ENCODE measurements at regions of chr9 and their contacts with region 1.

Region 1: DNA sequence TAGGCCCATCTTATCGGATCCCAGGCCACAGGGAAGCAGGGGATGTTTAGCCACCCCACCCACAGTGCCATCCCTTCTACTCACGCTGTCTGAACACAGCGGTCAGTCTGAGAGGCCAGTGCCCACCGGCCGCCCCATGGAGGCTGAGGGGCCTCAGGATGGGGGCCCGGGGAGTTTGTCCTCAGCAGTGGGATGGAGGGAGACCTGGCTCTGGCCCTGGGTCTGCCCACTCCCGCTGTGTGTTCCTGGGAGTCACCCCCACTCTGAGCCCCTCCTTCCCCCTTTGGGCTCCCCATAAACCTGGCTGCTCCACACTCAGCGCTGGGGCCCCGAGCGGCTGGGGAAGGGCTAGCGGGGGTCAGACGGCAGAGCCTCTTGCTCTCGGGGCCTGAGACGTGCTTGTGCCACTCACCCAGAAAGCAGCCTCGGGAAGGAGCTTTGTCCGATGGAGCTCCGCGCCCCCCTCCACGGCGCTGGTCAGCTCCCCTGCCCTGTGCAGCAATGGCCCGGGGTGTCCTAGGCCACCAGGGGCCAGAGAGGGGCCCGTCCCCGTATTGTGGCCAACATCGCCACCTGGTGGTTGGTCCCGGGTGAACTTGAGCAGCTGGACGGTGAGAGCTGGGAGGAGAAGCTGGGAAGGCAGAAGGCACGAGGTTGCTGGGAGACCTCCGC is 10.9 kb upstream of the LAMC3 start:
- DNase-seq: peak; percentile 49 to 69 (median 58)
- H3K4me3 ChIP-seq: no peak overlapping the region
- H3K27ac ChIP-seq: no peak overlapping the region
- H3K4me1 ChIP-seq: peaks cover 0 to 27% (median 15%) of the 10 kb centered on the region in 4 experiments
- H3K27me3 ChIP-seq: peaks cover 0 to 16% (median 0%) of the 10 kb centered on the region in 5 experiments

Region 2: GRCh38 chr9:130707225-130707976 is 290.7 kb before region 1 on chr9:
- CTCF ChIA-PET with region 1: interaction called, 11 read pairs
- POLR2A ChIA-PET with region 1: no interaction called
- DNase-seq: peak; percentile 79 to 87 (median 83)
- H3K4me3 ChIP-seq: no peak overlapping the region
- H3K27ac ChIP-seq: no peak overlapping the region
- H3K4me1 ChIP-seq: peaks cover 0 to 3% (median 0%) of the 10 kb centered on the region in 4 experiments
- H3K27me3 ChIP-seq: no peaks in the 10 kb centered on the region

Region 3: DNA sequence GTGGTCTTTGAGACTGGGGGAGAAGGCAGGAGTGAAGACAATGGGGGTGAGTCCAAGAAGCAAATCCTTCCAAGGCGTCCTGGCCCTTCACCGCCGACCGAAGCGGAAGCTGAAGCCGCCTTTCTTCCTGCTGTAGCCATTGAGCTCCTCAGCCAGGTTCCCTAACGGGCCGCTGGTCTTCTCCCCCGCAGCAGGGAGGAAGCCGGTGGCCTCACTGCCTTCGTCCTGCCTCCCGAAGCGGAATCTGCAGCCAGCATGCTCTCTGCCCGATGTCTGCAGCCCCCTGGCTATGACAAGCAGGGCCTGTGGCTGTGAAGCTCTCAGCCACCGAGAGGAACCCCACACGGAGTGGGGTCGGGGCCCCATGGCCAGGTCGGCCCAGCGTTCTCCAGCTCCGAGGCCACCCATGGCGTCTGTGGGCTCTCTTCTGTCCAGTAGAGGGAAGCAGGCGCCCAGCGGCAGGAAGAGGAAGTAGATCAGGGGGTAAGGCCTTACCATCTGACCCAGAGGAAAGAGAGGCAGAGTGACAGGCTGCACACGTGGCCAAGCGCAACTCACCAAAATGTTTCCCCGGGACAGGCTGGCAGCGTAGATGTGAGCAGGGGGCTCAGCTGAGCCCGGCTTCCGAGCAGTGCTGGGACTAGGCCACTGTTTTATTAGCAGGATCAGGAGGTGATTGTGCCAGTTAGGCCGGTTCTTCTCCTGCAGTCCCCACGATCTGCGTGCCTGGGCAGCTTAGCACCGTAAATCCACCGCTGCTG is 104.5 kb before region 1 on chr9:
- CTCF ChIA-PET with region 1: interaction called, 17 read pairs
- POLR2A ChIA-PET with region 1: no interaction called
- DNase-seq: peak; percentile 48 to 87 (median 78)
- H3K4me3 ChIP-seq: peak overlapping the region in 5 of 7 experiments; percentile 12 to 59 (median 56)
- H3K27ac ChIP-seq: no peak overlapping the region
- H3K4me1 ChIP-seq: peaks cover 0 to 17% (median 12%) of the 10 kb centered on the region in 4 experiments
- H3K27me3 ChIP-seq: no peaks in the 10 kb centered on the region